Aorta (tissue), 5 donors: ENCODE measurements at regions of chr17 and their contacts with region 1.

Region 1: DNA sequence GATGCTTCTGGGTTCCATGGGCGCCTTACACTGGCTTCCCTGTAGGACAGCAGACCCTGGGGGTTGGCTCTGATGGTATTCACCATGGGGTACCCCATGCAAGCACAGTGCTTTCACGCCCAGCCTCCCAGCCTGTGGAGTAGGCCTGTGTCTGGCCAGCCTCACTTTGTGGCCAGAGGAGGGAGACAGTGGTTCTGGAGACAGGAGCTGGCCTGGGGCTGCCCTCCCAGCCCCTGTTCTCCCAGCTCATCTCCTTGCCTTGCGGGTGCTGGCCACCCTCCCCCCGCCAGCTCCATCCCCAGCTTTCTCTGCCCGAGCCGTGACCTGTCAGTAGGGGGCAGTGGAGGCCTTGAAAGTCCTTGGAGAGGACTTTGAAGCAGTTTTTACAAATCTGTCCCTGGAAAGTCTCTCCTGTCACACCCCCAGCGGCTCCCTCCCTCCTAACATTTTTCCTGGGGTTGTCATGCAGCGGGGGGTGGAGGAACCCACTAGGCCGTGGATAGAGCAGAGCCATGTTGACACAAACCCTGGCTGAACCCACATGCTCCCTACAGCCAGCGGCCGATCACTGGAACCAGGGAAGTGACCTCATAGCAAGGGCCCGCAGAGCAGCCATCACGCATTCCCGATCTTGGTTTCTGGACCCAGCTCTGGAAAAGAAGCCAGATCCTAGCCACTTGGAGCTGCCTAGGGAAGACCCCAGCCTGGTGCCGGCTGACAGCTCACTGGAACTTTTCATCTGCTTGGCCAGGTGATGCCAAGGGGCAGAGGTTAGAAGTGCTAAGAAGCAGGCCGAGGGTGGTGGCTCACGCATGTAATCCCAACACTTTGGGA is 289.4 kb downstream of the SEC14L1 start:
- DNase-seq: peak; percentile 95 to 97
- ATAC-seq: peak; percentile 93
- H3K4me3 ChIP-seq: no peak overlapping the region
- H3K27ac ChIP-seq: peak overlapping the region in 1 of 2 donors; percentile 29
- H3K4me1 ChIP-seq: no peaks in the 10 kb centered on the region
- H3K27me3 ChIP-seq: no peaks in the 10 kb centered on the region

Region 2: GRCh38 chr17:77325577-77326075 is 104.5 kb before region 1 on chr17:
- intact Hi-C with region 1: loop called in 1 of 2 experiments (anchors 5 kb)
- DNase-seq: no peak
- ATAC-seq: no peak
- H3K4me3 ChIP-seq: no peak overlapping the region
- H3K27ac ChIP-seq: peak overlapping the region in 1 of 2 donors; percentile 64
- H3K4me1 ChIP-seq: peaks cover 0 to 2% of the 10 kb centered on the region in 2 donors
- H3K27me3 ChIP-seq: no peaks in the 10 kb centered on the region

Region 3: GRCh38 chr17:77331301-77331864 is 98.8 kb before region 1 on chr17:
- intact Hi-C with region 1: loop called (anchors 1 to 5 kb)
- DNase-seq: peak; percentile 95 to 99
- ATAC-seq: peak; percentile 92
- H3K4me3 ChIP-seq: no peak overlapping the region
- H3K27ac ChIP-seq: no peak overlapping the region
- H3K4me1 ChIP-seq: no peaks in the 10 kb centered on the region
- H3K27me3 ChIP-seq: no peaks in the 10 kb centered on the region

Region 4: GRCh38 chr17:77476931-77477877 is 47.1 kb after region 1 on chr17:
- intact Hi-C with region 1: loop called (anchors 5 kb)
- DNase-seq: peak; percentile 89 to 92
- ATAC-seq: peak; percentile 87
- H3K4me3 ChIP-seq: no peak overlapping the region
- H3K27ac ChIP-seq: peak overlapping the region in 1 of 2 donors; percentile 55
- H3K4me1 ChIP-seq: peaks cover 3 to 4% of the 10 kb centered on the region in 2 donors
- H3K27me3 ChIP-seq: no peaks in the 10 kb centered on the region

Region 5: DNA sequence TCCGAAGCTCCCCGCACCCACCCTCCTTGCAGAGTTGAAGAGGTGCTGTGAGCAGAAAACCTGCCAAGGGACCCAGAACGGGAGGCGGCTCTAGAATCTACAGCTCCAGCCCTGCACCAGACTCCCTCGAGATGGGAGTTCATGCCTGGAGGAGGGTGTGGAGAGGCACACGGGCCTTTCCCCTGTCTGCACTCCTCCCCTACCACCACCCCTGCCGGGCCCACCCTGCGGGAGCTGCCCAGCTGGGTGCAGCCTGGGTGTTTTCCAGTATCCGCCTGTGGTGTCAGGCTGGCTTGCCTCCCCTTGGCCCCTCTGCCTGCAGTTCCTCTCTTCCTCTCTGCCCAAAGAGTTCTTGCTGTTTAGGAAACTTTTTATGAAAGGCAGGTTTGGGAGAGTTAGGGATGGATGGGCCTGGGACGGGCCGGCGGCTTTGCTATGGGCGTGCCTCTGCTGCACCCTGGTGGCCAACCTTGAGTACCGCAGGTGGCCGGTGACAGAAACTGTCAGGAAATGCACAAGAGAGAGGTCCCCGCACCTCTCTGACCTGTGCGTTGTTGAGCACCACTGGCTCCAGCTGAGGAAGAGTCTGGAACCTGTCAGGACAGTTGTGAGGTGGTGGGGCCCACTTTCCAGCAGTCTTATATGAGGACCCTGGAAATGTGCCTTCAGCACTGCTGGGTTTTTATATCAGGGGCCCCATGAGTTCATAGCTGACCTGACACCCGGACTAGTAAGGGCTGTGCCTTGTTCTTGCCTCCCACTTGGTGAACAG is 64.7 kb after region 1 on chr17:
- intact Hi-C with region 1: loop called (anchors 1 to 2 kb)
- DNase-seq: peak; percentile 82 to 91
- ATAC-seq: peak; percentile 86
- H3K4me3 ChIP-seq: no peak overlapping the region
- H3K27ac ChIP-seq: no peak overlapping the region
- H3K4me1 ChIP-seq: no peaks in the 10 kb centered on the region
- H3K27me3 ChIP-seq: no peaks in the 10 kb centered on the region

Region 6: DNA sequence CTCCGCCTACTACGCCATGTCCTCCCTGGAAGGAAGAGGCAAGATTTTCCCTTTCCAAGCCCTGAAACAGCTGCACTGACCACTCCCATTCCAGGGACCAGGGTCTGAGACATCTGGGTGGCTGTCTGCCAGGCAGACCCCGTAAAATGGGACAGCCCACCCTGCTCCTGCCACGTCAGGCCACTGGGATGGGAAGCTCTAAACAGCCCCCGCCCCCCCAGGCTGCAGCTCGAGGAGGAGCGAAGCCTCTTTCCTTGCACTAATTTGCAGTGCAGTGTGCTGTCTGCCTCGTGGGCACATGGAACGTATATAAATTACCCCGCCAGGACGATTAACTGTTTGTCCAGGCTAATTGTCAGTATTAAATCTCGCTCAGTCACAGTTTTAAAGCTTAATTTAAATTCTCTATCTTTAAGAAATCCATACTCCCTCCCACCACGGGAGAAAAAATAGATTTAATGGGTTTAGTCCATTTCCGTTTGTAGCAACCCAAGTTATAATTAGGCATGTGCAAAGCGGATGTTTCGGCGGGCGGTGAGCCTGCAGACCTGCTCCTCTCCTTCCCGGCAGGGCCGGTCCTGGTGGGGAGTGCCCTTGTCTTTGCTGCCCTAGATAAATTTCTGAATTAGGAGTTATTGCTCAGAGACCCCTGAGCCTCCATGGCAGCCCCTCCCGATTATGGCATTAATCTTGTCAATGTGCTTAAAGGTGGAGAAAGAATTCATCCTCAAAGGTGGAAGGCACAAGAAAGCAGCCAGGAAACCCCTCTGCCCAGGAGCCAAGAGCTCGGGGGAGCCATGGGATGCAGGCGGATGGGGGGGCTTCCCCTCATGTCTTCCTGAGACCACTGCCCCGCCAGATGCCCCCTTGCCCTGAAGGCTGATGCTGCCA is 260.4 kb after region 1 on chr17:
- intact Hi-C with region 1: no loop called
- DNase-seq: peak in 1 of 2 donors; percentile 39
- ATAC-seq: no peak
- H3K4me3 ChIP-seq: peak overlapping the region in 1 of 2 donors; percentile 23
- H3K27ac ChIP-seq: no peak overlapping the region
- H3K4me1 ChIP-seq: no peaks in the 10 kb centered on the region
- H3K27me3 ChIP-seq: no peaks in the 10 kb centered on the region